Activated CD4-positive, alpha-beta memory T cell treated with anti-CD3 and anti-CD28 coated beads for 36 hours (primary cell): ENCODE measurements at regions of chr3 and their contacts with region 1.

Region 1: DNA sequence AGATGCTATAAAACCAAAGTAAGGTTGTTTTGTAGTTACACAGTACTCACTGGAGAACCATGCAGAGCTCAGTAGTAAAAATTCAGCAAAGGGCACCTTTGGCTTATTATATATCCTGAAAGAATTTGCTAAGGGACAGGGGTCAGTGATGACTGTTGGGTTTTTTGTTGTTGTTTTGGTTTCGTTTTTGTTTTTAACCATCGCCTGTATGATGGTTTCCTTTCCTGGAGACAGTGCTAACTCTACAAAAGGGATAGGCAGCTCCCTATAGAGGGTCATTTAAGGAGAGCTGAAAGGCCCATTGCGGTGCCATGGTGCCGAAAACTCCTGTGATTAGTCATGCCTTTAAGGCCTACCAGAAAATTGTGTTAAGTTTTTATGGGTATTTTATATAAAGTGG is 118.2 kb upstream of the GOLIM4 start:
- DNase-seq: no peak
- H3K4me3 Mint-ChIP-seq: no peak overlapping the region
- H3K27ac Mint-ChIP-seq: no peak overlapping the region
- H3K4me1 Mint-ChIP-seq: peaks cover 6% of the 10 kb centered on the region
- H3K27me3 Mint-ChIP-seq: no peaks in the 10 kb centered on the region

Region 2: GRCh38 chr3:168239287-168239686 is 25.4 kb after region 1 on chr3:
- CTCF ChIA-PET with region 1: no interaction called
- POLR2A ChIA-PET with region 1: no interaction called
- intact Hi-C with region 1: no loop called
- DNase-seq: no peak
- H3K4me3 Mint-ChIP-seq: no peak overlapping the region
- H3K27ac Mint-ChIP-seq: no peak overlapping the region
- H3K4me1 Mint-ChIP-seq: no peaks in the 10 kb centered on the region
- H3K27me3 Mint-ChIP-seq: no peaks in the 10 kb centered on the region

Region 3: GRCh38 chr3:168847291-168847883 is 633.5 kb after region 1 on chr3:
- CTCF ChIA-PET with region 1: interaction called, 18 read pairs
- POLR2A ChIA-PET with region 1: no interaction called
- intact Hi-C with region 1: loop called (anchors 1 kb)
- DNase-seq: no peak
- H3K4me3 Mint-ChIP-seq: no peak overlapping the region
- H3K27ac Mint-ChIP-seq: no peak overlapping the region
- H3K4me1 Mint-ChIP-seq: no peaks in the 10 kb centered on the region
- H3K27me3 Mint-ChIP-seq: no peaks in the 10 kb centered on the region